ENCODE measurements at regions of chr17 and their contacts with region 1.

Region 1: GRCh38 chr17:16453493-16453851 is 38.1 kb downstream of the TRPV2 start:
- DNase-seq: no peak
- ATAC-seq: no peak
- H3K4me3 ChIP-seq: no peak overlapping the region
- H3K4me1 ChIP-seq: no peaks in the 10 kb centered on the region
- CTCF ChIP-seq: no peak

Region 2: DNA sequence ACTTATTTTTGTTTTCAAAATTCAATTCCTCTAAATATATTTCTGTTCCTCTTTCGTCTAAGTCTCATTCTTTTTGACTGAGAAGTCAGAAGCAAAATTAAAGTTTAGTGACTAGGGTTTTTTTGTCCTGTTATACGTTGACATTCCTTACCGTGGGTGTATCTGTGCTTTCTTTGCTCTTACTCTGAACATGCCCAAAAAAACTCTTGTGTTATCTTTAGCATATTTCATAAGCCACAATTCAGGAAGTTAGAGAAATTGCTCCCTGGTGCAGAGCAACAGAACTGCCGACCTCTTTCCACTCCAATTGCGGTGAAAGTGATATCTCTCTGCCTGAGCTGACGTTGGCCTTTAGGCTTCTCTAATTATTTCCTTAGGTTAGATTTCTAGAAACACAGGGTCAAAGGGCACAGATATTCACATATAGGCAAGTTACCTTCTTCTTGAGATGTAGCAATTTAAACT is 165.9 kb before region 1 on chr17:
- intact Hi-C with region 1: no loop called
- DNase-seq: peak in 1 of 3 donors; percentile 51
- ATAC-seq: peak; percentile 31
- H3K4me3 ChIP-seq: no peak overlapping the region
- H3K4me1 ChIP-seq: peaks cover 50% of the 10 kb centered on the region
- CTCF ChIP-seq: no peak

Region 3: DNA sequence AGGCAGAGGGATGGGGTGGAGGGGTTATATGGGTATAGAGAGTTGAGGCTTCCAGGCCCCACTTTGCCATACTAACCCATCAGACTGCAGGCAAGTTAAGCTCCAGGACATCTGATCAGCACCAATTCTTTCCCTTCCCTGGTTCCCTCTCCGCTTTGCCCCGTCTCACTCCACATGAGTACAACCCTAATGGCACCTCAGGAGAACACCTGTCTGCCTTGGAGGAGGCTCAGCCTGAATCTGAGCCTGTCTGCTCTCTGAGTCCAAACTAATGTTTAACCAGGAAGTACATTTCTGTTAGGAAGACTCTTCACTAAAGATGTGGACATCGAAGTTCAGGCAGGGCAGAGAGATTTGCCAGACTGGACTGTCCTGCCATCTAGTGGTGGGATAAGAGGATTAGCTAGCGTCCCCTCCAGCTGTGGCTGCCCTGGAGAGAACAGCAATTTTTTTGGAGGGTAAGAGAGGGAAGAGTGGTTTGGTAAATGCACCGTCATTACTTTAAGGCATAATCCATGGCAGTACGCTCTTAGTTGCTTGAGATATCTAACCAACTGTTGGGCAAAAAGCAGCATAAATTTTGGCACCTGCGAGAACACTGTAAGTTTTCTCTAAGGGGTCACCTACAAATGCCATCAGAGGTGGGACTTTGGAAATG is 67.7 kb after region 1 on chr17:
- intact Hi-C with region 1: loop called (anchors 2 to 5 kb)
- DNase-seq: peak in 2 of 3 donors; percentile 64 to 76
- ATAC-seq: peak; percentile 99
- H3K4me3 ChIP-seq: no peak overlapping the region
- H3K4me1 ChIP-seq: peaks cover 5% of the 10 kb centered on the region
- CTCF ChIP-seq: peak; percentile 70

Measured in mucosa of descending colon (tissue), 3 donors.